ENCODE measurements at regions of chr1 and their contacts with region 1.

Region 1: DNA sequence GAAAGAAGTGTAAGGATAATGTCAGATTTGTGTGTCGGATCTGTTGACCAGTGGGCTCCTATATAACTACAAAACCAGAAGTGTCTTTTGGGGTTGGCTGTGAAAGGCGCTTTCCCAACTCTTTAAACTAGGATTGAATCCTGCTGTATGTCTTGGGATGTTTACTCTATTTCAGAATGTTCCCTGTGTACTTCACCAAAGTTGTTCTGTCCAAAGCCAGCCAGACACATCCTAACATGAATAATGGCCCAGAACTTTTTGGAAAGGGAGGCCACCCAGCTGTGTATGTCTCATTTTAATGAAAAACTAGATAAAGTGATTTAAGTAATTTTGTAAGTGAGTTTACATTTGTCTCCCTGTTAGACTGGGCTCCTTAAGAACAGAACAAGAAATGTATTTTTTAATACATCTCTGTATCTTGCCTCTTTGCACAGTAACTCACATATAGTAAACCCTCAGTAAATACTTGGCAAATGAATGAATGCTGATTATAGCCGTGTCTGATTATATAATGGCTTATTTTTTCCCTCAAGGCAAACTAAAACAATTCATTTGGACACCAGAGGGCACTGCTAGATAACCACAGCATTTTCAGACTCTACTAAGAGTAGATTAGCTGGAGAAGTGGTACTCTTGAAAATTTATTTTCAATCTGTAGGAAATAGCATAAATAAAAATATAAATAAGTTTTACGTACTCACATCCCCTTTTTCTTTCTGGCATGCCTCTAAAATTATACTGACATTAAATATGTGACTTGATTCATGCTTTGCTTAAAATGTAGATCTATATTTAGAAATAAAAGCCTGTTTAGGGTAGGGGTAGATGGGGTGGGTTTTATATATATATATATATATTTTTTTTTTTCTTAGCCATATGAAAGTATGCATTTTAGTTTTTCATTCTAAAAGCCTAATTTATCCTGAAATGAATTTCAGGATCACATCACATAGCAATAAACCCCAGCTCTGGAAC is 23.8 kb downstream of the TSEN15 start:
- DNase-seq: no peak
- ATAC-seq: peak; percentile 91

Region 2: DNA sequence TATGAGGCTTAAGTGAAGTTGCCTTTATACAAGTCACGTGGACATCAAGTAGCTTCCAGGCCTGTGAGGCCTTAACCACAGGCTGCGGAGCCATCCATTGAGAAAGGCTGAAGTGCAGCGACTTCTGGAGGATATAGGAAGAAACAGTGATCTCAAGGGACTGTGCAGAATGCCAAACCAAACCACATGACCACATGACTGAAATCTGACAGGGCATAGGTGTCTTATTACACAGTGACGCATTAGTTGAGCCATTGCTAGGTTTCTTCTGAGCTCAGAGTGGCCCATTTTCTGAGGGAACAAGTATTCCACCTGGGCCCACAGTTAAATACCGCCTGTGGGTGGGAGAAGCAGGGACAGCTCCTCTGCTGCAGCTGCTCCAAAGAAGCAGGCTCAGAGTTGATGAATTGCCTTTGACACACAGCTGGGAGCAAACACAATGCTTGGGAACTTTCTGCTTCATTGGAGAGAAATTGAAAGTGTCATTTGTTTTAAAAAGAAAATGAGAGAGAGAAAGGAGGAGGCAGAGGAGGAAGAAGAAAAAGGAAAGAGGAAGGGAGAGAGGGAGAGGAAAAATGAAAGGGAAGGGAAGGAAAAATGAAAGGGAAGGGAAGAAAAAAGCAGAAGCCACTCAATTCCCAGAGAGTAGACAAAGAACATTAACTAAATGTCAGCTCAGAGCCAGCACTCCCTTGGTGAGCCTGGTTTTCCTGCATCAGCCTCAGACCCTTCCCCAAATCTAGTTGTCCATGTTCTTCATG is 132.2 kb before region 1 on chr1:
- intact Hi-C with region 1: no loop called
- DNase-seq: no peak
- ATAC-seq: peak; percentile 26

Region 3: GRCh38 chr1:184222652-184223052 is 147.3 kb after region 1 on chr1:
- intact Hi-C with region 1: loop called (anchors 2 kb)
- DNase-seq: peak; percentile 53
- ATAC-seq: peak; percentile 83

Region 4: DNA sequence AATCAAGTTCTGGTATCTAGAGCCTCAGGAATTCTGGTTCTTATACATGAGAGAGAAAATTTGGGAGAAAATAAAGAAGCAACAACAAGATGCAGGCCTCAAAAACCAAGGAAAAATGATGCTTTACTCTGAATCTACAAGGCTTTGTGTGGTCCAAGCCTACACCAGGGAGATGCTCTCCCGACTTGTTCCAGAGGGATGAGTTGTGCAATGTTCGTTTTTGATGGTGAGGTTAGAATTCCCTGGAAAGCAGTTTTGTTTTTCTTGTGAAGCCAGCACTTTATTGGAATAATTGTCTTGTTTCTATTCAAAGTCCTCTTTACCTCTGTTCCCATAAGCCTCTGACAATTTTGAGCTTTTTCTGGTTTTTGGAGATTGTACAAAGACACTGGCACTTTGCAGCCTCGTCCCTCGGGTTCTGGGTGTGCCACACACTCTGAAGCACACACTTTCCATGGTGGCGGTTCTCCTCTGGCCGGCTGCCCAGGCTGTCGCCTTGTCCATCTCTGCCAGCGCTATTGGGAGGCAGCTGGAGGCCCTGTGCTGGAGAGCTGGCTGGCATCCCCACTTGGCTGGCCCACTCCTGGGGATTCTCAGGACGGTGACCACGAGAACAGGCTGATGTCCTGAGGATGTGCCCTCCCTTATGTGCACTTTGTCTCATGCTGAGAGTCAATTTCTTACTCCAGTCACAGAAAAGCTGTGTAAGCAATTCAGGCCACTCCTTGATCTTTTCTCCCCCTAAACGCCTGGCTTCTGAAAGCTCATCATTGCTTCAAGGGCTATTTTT is 609.1 kb after region 1 on chr1:
- intact Hi-C with region 1: loop called (anchors 10 kb)
- DNase-seq: peak; percentile 55
- ATAC-seq: peak; percentile 64